Caco-2 (cell line): ENCODE measurements at regions of chr10 and their contacts with region 1.

Region 1: GRCh38 chr10:24249829-24250415 is 41.0 kb downstream of the KIAA1217 start:
- DNase-seq: peak in 1 of 2 experiments; percentile 43
- H3K4me3 ChIP-seq: no peak overlapping the region
- H3K4me3 Mint-ChIP-seq: no peak overlapping the region
- H3K27ac Mint-ChIP-seq: peak overlapping the region; percentile 55
- H3K4me1 ChIP-seq: peaks cover 53% of the 10 kb centered on the region
- H3K4me1 Mint-ChIP-seq: peaks cover 37% of the 10 kb centered on the region
- H3K27me3 ChIP-seq: no peaks in the 10 kb centered on the region
- H3K27me3 Mint-ChIP-seq: no peaks in the 10 kb centered on the region
- CTCF ChIP-seq: no peak

Region 2: GRCh38 chr10:24193330-24193729 is 56.6 kb before region 1 on chr10:
- CTCF ChIA-PET with region 1: no interaction called
- POLR2A ChIA-PET with region 1: no interaction called
- intact Hi-C with region 1: no loop called
- DNase-seq: no peak
- H3K4me3 ChIP-seq: no peak overlapping the region
- H3K4me3 Mint-ChIP-seq: no peak overlapping the region
- H3K27ac Mint-ChIP-seq: no peak overlapping the region
- H3K4me1 ChIP-seq: peaks cover 7% of the 10 kb centered on the region
- H3K4me1 Mint-ChIP-seq: no peaks in the 10 kb centered on the region
- H3K27me3 ChIP-seq: no peaks in the 10 kb centered on the region
- H3K27me3 Mint-ChIP-seq: no peaks in the 10 kb centered on the region
- CTCF ChIP-seq: no peak

Region 3: DNA sequence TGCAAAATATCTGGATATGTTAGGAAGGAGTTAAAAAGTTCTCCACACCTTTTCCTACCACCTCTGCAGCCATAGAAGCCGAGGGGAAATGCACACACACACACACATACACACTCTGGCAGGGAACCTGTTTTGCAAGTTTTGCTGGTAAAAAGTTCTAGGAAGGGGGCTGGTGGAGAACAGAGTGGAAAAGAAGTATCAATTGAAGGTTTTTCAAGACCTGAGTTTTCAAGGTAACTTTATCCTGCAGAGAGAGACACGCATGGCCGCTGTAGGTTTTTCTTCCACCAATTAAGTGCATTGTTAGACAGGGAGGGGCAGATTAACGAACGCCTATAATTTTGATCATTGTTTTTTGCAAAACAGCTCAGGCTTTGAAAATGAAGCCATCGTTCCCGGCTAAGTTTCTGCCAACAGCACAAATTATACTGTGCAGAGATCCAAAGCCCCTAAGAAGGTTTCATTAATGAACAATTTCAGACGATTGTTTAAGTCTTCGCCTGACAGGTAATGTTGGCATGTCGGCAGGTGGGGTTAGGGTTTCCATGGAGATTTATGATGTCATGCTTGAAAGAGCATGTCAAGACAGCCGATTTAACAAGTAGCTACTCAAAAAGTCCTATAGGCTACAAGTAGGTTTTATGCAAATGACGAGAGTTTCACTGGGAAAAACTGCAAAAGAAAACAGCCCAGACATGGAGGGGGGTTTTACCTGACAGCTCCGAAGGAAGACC is 11.2 kb before region 1 on chr10:
- CTCF ChIA-PET with region 1: interaction called, 5 read pairs
- POLR2A ChIA-PET with region 1: interaction called, 4 read pairs
- intact Hi-C with region 1: loop called (anchors 1 kb)
- DNase-seq: peak; percentile 87 to 88
- H3K4me3 ChIP-seq: peak overlapping the region; percentile 35
- H3K4me3 Mint-ChIP-seq: peak overlapping the region; percentile 89
- H3K27ac Mint-ChIP-seq: peak overlapping the region; percentile 97
- H3K4me1 ChIP-seq: peaks cover 44% of the 10 kb centered on the region
- H3K4me1 Mint-ChIP-seq: peaks cover 74% of the 10 kb centered on the region
- H3K27me3 ChIP-seq: no peaks in the 10 kb centered on the region
- H3K27me3 Mint-ChIP-seq: no peaks in the 10 kb centered on the region
- CTCF ChIP-seq: no peak

Region 4: GRCh38 chr10:24262931-24263590 is 13.1 kb after region 1 on chr10:
- CTCF ChIA-PET with region 1: interaction called, 7 read pairs
- POLR2A ChIA-PET with region 1: interaction called, 8 read pairs
- intact Hi-C with region 1: loop called (anchors 1 kb)
- DNase-seq: no peak
- H3K4me3 ChIP-seq: no peak overlapping the region
- H3K4me3 Mint-ChIP-seq: no peak overlapping the region
- H3K27ac Mint-ChIP-seq: no peak overlapping the region
- H3K4me1 ChIP-seq: peaks cover 27% of the 10 kb centered on the region
- H3K4me1 Mint-ChIP-seq: peaks cover 32% of the 10 kb centered on the region
- H3K27me3 ChIP-seq: no peaks in the 10 kb centered on the region
- H3K27me3 Mint-ChIP-seq: no peaks in the 10 kb centered on the region
- CTCF ChIP-seq: no peak

Region 5: GRCh38 chr10:24272374-24272773 is 22.5 kb after region 1 on chr10:
- CTCF ChIA-PET with region 1: interaction called, 3 read pairs
- POLR2A ChIA-PET with region 1: interaction called, 5 read pairs
- intact Hi-C with region 1: loop called (anchors 1 kb)
- DNase-seq: peak in 1 of 2 experiments; percentile 41
- H3K4me3 ChIP-seq: no peak overlapping the region
- H3K4me3 Mint-ChIP-seq: peak overlapping the region; percentile 57
- H3K27ac Mint-ChIP-seq: peak overlapping the region; percentile 45
- H3K4me1 ChIP-seq: peaks cover 32% of the 10 kb centered on the region
- H3K4me1 Mint-ChIP-seq: peaks cover 31% of the 10 kb centered on the region
- H3K27me3 ChIP-seq: no peaks in the 10 kb centered on the region
- H3K27me3 Mint-ChIP-seq: no peaks in the 10 kb centered on the region
- CTCF ChIP-seq: no peak

Region 6: DNA sequence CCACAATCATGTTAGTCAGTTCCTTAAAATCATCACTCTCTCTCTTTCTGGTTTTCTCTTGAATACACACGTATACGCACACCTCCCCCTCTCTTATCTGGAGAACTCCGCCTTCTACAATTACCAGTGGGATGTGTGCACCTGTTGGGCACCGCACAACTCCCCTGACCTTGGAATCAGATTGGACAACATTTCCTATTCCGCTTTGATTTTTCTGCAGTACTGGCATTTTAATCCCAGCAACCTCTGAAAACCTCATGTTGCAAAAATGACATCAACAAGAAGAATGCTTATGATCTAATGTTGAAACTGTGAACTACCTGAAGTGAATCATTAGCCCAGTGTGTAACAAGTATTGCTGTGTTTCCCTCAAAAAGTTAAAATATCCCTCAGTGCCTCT is 68.6 kb after region 1 on chr10:
- CTCF ChIA-PET with region 1: no interaction called
- POLR2A ChIA-PET with region 1: no interaction called
- intact Hi-C with region 1: loop called (anchors 1 kb)
- DNase-seq: peak in 1 of 2 experiments; percentile 46
- H3K4me3 ChIP-seq: no peak overlapping the region
- H3K4me3 Mint-ChIP-seq: no peak overlapping the region
- H3K27ac Mint-ChIP-seq: peak overlapping the region; percentile 54
- H3K4me1 ChIP-seq: peaks cover 18% of the 10 kb centered on the region
- H3K4me1 Mint-ChIP-seq: peaks cover 19% of the 10 kb centered on the region
- H3K27me3 ChIP-seq: no peaks in the 10 kb centered on the region
- H3K27me3 Mint-ChIP-seq: no peaks in the 10 kb centered on the region
- CTCF ChIP-seq: no peak

Region 7: DNA sequence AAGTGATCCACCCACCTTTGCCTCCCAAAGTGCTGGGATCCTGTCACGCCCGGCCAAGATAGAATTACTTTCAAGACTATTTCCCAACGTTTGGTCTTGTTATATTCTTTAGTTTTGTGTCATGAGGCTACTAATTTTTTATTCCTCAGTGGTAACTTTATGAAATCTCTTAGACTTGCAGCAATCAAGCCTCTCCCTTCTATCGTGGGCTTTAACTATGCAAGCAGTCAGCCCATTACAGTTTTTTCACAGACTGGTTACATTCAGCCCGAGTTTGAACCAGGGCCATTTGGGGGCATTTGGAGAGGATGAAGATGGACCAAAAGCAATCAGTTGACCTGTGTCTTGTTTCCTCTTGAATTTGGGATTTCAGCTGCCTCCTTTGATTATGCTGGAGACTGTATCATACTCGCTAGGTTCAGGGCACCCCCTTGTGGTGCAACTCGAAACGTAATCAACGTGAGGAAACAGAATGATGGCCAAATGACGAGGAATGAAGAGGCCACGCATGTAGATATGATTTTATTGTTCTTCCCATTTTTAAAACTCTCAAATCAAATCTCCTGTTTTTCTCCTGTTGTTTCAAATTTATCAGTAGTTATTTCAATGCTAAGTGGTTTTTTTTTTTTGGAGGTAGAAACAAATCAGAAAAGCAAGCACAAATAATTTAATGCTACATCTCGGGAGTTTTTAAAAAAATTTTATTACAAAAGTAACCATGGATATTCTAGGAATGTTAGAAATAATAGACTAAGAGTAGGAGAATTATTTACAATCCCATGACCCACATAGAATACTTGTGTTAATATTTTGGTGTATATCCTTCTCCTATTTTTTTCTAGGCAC is 110.6 kb after region 1 on chr10:
- CTCF ChIA-PET with region 1: interaction called, 4 read pairs
- POLR2A ChIA-PET with region 1: no interaction called
- intact Hi-C with region 1: loop called (anchors 1 kb)
- DNase-seq: peak; percentile 75 to 84
- H3K4me3 ChIP-seq: no peak overlapping the region
- H3K4me3 Mint-ChIP-seq: no peak overlapping the region
- H3K27ac Mint-ChIP-seq: peak overlapping the region; percentile 36
- H3K4me1 ChIP-seq: no peaks in the 10 kb centered on the region
- H3K4me1 Mint-ChIP-seq: peaks cover 7% of the 10 kb centered on the region
- H3K27me3 ChIP-seq: no peaks in the 10 kb centered on the region
- H3K27me3 Mint-ChIP-seq: no peaks in the 10 kb centered on the region
- CTCF ChIP-seq: peak; percentile 91 to 92